ENCODE measurements at regions of chr5 and their contacts with region 1.

Region 1: DNA sequence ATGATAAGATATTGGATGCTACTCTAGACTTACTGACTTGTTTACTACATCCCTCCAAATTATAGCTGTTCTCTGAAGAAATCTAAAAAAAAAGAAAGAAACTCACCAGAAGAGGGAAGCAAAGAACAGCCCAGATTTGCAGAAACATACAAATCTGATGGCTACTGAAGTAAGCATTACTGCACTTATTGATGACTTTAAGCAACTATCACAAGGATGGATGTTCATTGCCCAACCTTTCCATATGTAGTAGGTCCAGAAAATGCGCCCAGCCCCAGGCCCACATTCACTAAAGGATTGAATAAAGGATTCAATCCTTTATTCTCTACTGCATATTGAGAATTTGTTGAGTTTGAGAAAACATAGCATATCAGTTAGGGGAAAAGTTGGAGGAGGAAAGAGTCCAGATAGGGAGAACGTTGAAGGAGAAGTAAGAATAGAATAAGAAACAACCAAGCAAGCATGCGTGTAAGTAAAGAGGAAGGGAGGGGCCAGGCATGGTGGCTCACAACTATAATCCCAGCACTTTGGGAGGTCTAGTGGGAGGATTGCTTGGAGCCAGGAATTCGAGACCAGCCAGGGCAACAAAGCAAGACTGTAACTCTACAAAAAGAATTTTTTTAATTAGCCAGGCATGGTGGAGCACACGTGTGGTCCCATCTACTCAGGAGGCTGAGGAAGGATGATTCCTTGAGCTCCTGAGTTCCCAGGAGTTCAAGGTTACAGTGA is 33.8 kb upstream of the DTWD2 start:
- DNase-seq: peak; percentile 50
- ATAC-seq: peak; percentile 25; the same call in 1 of the 2 replicates
- H3K4me3 ChIP-seq: no peak overlapping the region
- H3K27ac ChIP-seq: no peak overlapping the region
- H3K4me1 ChIP-seq: peaks cover 16% of the 10 kb centered on the region
- H3K27me3 ChIP-seq: no peaks in the 10 kb centered on the region
- CTCF ChIP-seq: peak; percentile 67

Region 2: DNA sequence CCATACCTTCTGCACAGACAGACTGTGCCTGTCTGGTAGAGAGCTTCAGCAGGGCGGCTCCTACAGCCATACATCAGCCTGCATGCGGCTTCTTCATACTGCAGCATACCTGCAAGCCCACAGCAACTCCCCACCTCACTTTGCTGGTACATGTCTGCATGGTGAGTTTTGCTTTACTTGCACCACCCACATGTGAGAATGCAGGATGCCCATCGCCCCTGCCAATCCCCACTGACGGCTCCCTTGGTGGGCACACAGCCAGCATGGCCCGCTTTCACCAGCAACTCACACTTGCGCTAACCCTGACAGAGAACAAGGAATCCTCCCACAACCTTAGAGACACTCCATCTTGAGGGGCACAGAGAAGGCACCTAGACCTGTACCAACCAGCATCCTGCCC is 148.8 kb before region 1 on chr5:
- CTCF ChIA-PET with region 1: no interaction called
- POLR2A ChIA-PET with region 1: no interaction called
- intact Hi-C with region 1: no loop called
- DNase-seq: no peak
- ATAC-seq: no peak
- H3K4me3 ChIP-seq: no peak overlapping the region
- H3K27ac ChIP-seq: no peak overlapping the region
- H3K4me1 ChIP-seq: no peaks in the 10 kb centered on the region
- H3K27me3 ChIP-seq: no peaks in the 10 kb centered on the region
- CTCF ChIP-seq: no peak

Region 3: GRCh38 chr5:118937393-118938061 is 84.7 kb before region 1 on chr5:
- CTCF ChIA-PET with region 1: no interaction called
- POLR2A ChIA-PET with region 1: no interaction called
- intact Hi-C with region 1: no loop called
- DNase-seq: no peak
- ATAC-seq: no peak
- H3K4me3 ChIP-seq: no peak overlapping the region
- H3K27ac ChIP-seq: no peak overlapping the region
- H3K4me1 ChIP-seq: no peaks in the 10 kb centered on the region
- H3K27me3 ChIP-seq: no peaks in the 10 kb centered on the region
- CTCF ChIP-seq: no peak

Region 4: DNA sequence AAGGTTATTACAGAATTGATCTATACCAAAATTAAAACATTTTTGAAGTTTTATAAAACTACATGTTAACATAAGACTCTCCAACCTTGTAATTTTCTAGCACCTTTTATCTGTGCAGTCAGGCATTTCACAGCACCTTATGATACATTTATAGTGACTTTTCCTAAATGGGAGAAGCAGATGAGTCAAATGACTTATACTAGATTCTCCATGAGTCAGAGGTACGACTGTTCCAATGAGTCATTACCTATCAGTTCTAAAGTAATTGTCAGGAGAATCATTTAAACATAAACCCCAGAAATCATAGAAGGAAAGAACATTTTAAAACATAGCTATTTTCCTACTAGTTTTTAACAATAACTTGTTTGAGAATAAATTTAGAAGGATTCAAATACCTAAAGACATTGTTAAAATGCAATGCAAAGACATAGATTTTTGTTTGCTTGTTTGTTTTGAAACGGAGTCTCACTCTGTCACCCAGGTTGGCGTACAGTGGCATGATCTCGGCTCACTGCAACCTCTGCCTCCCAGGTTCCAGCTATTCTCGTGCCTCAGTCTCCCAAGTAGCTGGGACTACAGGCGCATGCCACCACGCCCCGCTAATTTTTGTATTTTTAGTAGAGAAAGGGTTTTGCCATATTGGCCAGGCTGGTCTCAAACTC is 14.1 kb after region 1 on chr5:
- CTCF ChIA-PET with region 1: no interaction called
- POLR2A ChIA-PET with region 1: no interaction called
- intact Hi-C with region 1: loop called (anchors 2 kb)
- DNase-seq: peak; percentile 78
- ATAC-seq: peak; percentile 94
- H3K4me3 ChIP-seq: no peak overlapping the region
- H3K27ac ChIP-seq: peak overlapping the region; percentile 64
- H3K4me1 ChIP-seq: peaks cover 19% of the 10 kb centered on the region
- H3K27me3 ChIP-seq: no peaks in the 10 kb centered on the region
- CTCF ChIP-seq: no peak

Region 5: DNA sequence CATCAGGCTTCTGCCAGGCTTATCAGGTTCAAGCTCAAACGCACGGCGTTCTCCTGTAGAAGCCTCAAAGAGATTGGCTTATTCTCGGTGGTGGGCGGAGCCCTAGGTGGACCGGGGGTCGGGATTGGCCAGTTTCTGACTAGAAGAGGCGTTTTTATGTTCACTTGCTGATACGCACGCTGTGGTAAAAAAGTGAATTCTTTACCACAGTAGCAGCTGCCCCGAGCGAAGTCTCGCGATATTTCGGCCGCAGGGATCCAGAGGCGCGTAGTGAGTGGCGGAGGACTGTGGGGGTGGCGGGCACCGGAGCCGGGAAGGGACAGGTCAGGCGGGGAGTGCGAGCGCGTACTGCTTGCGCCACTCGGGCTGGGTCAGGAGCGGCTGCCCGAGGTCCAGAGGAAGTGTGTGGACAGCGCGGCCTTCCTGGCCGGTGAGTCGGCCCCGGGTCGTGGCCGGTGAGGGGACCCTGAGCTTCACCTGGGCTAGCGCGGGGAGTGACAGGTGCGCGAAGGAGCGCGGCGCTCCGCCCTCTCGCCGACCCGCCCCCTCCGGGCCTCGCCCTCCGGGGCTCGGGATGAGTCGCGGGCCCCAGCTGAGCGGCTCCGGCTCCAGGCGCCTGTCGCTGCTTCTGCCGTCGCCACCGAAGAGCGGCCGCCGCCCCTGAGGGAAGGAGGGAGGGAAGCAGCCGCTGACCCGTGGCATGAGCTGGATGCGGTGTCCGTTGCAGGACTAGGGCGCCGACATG is 48.8 kb after region 1 on chr5 and contains the start of gene DMXL1:
- CTCF ChIA-PET with region 1: interaction called, 6 read pairs
- POLR2A ChIA-PET with region 1: no interaction called
- intact Hi-C with region 1: loop called (anchors 5 kb)
- DNase-seq: peak; percentile 97
- ATAC-seq: peak; percentile 88
- H3K4me3 ChIP-seq: peak within 1 kb of the TSS; percentile 98
- H3K27ac ChIP-seq: peak within 1 kb of the TSS; percentile 77
- H3K4me1 ChIP-seq: peaks cover 11% of the 10 kb centered on the region
- H3K27me3 ChIP-seq: no peaks in the 10 kb centered on the region
- CTCF ChIP-seq: no peak
- total RNA-seq, gene DMXL1: 16.0 and 20.6 TPM in 2 replicates

Region 6: GRCh38 chr5:119174578-119175163 is 152.5 kb after region 1 on chr5:
- CTCF ChIA-PET with region 1: interaction called, 3 read pairs
- POLR2A ChIA-PET with region 1: no interaction called
- intact Hi-C with region 1: loop called (anchors 5 kb)
- DNase-seq: no peak
- ATAC-seq: no peak
- H3K4me3 ChIP-seq: no peak overlapping the region
- H3K27ac ChIP-seq: no peak overlapping the region
- H3K4me1 ChIP-seq: peaks cover 5% of the 10 kb centered on the region; the same call in 1 of the 2 replicates
- H3K27me3 ChIP-seq: no peaks in the 10 kb centered on the region
- CTCF ChIP-seq: no peak

Region 7: DNA sequence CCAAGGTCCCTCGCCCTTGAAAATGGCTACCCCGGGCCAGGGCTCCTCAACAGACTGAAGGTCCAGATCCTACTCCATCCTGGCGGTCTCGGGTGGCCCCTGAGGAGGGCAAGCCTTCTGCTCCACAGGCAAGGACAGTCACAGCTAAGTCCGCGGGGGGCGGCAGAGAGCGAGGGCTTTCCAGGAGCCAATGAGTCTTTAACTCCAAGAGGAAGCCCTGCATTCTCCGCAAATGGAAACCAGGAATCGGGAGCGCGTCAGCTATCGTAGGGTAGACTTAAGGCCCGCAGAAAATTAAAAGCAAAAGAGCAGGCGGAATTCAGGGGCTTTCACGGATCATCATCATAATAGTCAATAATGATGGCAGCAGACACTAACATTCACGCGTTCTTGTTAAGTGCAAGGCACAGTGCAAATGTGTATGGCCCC is 245.8 kb after region 1 on chr5:
- CTCF ChIA-PET with region 1: interaction called, 3 read pairs
- POLR2A ChIA-PET with region 1: no interaction called
- intact Hi-C with region 1: loop called (anchors 5 kb)
- DNase-seq: peak; percentile 90
- ATAC-seq: peak; percentile 77
- H3K4me3 ChIP-seq: peak overlapping the region; percentile 93
- H3K27ac ChIP-seq: peak overlapping the region; percentile 75
- H3K4me1 ChIP-seq: peaks cover 33% of the 10 kb centered on the region
- H3K27me3 ChIP-seq: no peaks in the 10 kb centered on the region
- CTCF ChIP-seq: no peak

Region 8: GRCh38 chr5:119336845-119337580 is 314.8 kb after region 1 on chr5:
- CTCF ChIA-PET with region 1: interaction called, 4 read pairs
- POLR2A ChIA-PET with region 1: no interaction called
- intact Hi-C with region 1: loop called (anchors 5 kb)
- DNase-seq: no peak
- ATAC-seq: no peak
- H3K4me3 ChIP-seq: no peak overlapping the region
- H3K27ac ChIP-seq: no peak overlapping the region
- H3K4me1 ChIP-seq: peaks cover 3% of the 10 kb centered on the region; the same call in 1 of the 2 replicates
- H3K27me3 ChIP-seq: no peaks in the 10 kb centered on the region
- CTCF ChIP-seq: no peak